Activated T-helper 1 cell treated with anti-CD3 and anti-CD28 coated beads, Interleukin-12 subunit alpha, Interleukin-12 subunit beta, Interleukin-2, Interleukin-4 antibody, amounts not matched to agents 30 ng/mL and 10 ng/mL and 1 ng/mL, durations not matched to agents 14 hours and 24 hours and 36 hours (primary cell): ENCODE measurements at regions of chr7 and their contacts with region 1.

Region 1: DNA sequence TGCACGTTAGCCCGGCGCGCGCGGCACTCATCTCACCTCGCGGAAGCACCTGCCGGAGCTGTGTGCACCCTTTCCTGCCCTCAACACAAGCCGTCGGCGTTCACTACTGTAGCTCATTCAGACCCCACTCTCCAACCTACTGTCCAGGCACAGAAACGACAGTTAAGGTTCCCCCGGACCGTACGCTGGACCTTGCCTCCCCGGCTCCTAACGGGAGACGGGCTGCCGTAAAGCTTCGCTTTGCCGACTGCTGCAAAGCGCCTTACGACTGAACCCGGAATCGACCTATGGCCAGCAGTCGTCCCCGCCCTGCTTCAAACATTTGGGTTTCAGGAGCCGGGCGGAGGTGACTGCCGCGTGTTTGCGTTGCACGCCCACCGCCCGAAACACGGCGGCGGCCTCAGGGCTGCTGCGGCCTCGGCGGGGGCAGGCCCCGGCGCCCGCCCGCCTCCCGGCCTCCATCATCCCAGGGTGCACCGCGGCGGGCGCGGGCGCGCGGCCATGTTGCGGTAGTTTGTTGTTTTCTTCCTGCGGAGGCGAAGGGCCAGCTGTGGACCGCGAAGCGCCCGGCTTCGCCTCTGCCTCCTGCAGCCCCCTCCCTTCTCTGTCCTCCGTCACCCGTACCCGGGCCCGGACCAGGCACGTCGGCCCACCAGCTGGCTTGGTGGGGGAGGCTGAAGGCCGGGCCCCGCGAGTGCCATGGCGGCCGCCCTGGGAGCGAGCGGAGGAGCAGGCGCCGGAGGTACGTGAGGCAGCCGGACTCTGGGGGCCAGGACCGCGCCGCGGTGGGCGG is at the start of gene RBM33:
- DNase-seq: peak; percentile 78
- H3K4me3 Mint-ChIP-seq: peak within 1 kb of the TSS; percentile 99
- H3K27ac Mint-ChIP-seq: peak within 1 kb of the TSS; percentile 99
- H3K4me1 Mint-ChIP-seq: peaks cover 41% of the 10 kb centered on the region
- H3K27me3 Mint-ChIP-seq: no peaks in the 10 kb centered on the region
- total RNA-seq, gene RBM33: 75.2 and 78.9 TPM in 2 replicates

Region 2: DNA sequence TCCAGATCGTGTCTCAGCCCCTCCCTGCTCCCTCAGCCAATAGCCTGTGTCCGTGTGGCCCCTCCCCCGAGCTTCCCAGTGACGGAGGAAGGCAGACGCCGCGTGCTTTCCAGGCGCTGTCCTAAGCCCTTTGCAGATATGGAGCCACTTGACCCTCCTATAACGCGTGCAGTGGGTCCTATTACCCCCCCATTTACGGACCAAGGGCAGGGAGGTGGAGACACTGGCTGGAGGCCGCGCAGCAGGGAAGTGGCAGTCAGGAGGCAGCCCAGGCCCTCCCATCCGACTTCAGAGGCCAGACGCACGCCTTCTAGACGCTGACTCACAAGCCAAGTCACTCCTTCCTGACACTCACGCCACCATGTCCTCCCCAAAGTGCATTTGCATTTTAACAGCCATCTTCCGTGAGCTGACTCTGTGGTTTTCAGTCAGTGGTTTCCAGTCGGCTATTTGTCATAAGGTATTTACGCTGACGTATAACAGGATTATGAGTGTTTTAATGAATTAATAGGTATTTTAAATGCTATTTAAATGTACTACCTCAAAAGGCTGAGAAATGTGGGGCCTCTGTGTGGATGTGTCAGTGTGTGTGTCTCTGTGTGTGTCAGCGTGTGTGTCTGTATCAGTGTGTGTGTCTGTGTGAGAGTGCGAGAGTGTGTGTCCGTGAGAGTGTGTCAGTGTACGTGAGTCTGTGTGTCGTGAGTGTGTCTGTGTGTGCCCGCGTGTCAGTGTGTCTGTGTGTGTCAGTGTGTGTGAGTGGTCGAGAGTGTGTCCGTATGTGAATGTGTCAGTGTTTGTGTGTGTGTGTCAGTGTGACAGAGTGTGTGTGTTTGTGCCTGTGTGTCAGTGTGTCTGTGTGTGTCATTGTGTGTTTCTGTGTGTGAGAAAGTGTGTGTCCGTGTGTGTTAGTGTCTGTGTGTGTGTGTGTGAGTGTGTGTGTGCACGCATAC is 438.7 kb before region 1 on chr7:
- intact Hi-C with region 1: loop called (anchors 2 kb)
- DNase-seq: peak; percentile 86
- H3K4me3 Mint-ChIP-seq: peak overlapping the region; percentile 84
- H3K27ac Mint-ChIP-seq: peak overlapping the region; percentile 99
- H3K4me1 Mint-ChIP-seq: peaks cover 31% of the 10 kb centered on the region
- H3K27me3 Mint-ChIP-seq: no peaks in the 10 kb centered on the region

Region 3: DNA sequence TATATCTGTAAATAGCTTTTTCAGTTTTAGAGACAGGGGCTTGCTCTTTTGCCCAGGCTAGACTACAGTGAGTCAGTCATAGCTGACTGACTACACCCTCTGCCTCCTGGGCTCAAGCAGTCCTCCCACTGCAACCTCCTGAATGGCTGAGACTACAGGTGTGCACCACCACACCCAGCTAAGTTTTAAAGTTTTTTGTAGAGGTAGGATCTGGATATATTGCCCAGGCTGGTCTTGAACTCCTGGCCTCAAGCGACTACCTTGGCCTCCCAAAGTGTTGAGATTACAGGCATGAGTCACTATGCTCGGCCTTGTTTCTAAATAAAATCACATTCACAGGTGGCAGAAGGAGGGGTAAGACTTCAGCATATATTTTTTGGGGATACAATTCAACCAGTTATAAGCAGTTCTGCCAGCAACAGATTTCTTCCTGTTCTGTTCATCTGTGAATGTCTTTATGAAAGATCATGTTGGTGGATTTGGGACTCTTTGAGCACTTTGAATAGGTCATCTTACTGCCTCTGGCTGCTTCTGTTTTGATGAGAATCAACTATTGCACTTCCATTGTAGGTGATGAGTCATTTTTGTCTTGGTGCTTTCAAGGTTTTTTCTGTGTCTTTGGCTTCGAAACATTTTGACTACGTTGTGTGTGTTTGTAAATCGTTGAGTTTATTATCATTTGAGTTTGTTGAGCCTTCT is 15.8 kb after region 1 on chr7:
- intact Hi-C with region 1: loop called (anchors 1 kb)
- DNase-seq: no peak
- H3K4me3 Mint-ChIP-seq: no peak overlapping the region
- H3K27ac Mint-ChIP-seq: peak overlapping the region; percentile 87
- H3K4me1 Mint-ChIP-seq: peaks cover 48% of the 10 kb centered on the region
- H3K27me3 Mint-ChIP-seq: no peaks in the 10 kb centered on the region

Region 4: GRCh38 chr7:155738652-155739537 is 94.5 kb after region 1 on chr7:
- intact Hi-C with region 1: loop called (anchors 1 kb)
- DNase-seq: peak; percentile 44
- H3K4me3 Mint-ChIP-seq: peak overlapping the region; percentile 67
- H3K27ac Mint-ChIP-seq: peak overlapping the region; percentile 79
- H3K4me1 Mint-ChIP-seq: peaks cover 65% of the 10 kb centered on the region
- H3K27me3 Mint-ChIP-seq: no peaks in the 10 kb centered on the region

Region 5: DNA sequence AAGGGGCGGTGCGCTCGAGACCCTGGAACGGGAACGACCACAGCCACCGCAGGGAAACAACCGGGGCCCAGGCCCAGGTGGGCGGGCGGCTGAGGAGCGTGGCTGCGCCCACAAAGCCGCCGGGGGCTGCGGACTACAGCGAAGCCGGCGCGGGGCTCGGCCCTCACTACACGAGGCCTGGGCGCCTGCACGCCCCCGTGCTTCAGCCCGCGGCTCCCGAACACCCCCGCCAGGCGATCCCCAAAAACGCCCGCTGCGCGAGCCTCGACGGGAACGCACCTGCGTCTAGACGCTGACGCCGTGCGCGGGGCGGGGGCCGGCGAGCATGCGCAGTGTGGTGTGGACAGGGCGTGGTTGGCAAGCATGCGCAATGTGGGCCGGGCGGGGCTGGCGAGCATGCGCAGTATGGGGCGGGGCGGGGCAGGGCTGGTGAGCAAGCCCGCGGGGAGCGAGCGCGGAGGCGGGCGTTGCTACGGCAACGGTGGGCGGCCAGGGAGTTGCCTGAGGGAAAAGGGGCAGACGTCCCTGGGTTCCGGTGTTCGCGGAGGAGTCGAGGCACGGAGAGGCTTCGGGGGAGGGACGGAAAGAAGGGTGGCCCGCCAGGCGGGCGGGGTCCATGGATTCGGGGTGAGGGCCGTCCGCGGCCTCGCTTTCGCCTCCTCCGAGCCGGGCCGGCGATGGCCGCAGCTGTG is 996.0 kb after region 1 on chr7 and contains the start of gene RNF32:
- intact Hi-C with region 1: loop called (anchors 1 kb)
- DNase-seq: peak; percentile 95
- H3K4me3 Mint-ChIP-seq: peak within 1 kb of the TSS; percentile 93
- H3K27ac Mint-ChIP-seq: peak within 1 kb of the TSS; percentile 99
- H3K4me1 Mint-ChIP-seq: peaks cover 53% of the 10 kb centered on the region
- H3K27me3 Mint-ChIP-seq: peaks cover 6% of the 10 kb centered on the region
- total RNA-seq, gene RNF32: 2.1 and 2.2 TPM in 2 replicates

Region 6: GRCh38 chr7:157138424-157139110 is 1494.2 kb after region 1 on chr7 and contains the start of gene UBE3C:
- intact Hi-C with region 1: loop called (anchors 1 kb)
- DNase-seq: peak; percentile 89
- H3K4me3 Mint-ChIP-seq: peak within 1 kb of the TSS; percentile 88
- H3K27ac Mint-ChIP-seq: peak within 1 kb of the TSS; percentile 97
- H3K4me1 Mint-ChIP-seq: peaks cover 41% of the 10 kb centered on the region
- H3K27me3 Mint-ChIP-seq: no peaks in the 10 kb centered on the region
- total RNA-seq, gene UBE3C: 91.5 and 95.8 TPM in 2 replicates